ENCODE measurements at regions of chr13 and their contacts with region 1.

Region 1: DNA sequence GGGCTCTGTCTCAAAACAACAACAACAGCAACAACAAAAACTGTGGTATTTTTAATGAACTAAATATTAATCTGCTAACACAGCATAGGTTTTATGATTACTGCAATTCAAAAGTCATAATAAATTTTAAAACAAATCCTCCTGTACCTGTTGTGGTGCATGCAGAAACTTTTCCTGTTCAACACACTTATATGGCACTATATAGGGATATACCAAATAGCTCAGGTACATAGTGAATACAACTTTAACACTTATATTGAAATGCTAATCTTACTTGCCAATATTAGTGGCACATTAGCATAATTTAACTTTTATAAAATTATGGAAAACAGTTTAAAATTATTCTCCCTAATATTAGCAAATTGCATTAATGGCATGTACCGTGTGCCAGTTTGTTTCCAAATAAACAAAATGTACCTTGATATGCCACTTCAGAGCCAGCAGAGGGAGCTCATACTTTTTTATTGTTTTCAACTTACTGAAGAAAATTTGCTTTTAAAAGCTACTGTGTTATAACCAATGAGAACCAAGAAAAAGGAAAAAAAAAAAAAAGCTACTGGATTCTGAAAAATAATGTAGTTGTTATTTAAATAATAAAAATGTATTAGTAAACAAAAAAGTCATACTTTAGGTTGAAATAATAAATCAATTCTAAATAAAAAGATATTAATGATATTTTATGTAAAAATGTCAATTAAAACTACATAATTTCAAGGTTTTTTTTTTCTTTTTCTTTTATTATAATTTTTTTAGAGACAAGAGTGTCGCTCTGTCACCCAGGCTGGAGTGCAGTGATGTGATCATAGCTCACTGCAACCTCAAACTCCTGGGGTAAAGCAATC is 18.0 kb upstream of the RBM26 start:
- DNase-seq: no peak
- ATAC-seq: peak in 1 of 2 donors; percentile 59

Region 2: GRCh38 chr13:79128158-79128557 is 295.9 kb before region 1 on chr13:
- intact Hi-C with region 1: no loop called
- DNase-seq: no peak
- ATAC-seq: no peak

Region 3: DNA sequence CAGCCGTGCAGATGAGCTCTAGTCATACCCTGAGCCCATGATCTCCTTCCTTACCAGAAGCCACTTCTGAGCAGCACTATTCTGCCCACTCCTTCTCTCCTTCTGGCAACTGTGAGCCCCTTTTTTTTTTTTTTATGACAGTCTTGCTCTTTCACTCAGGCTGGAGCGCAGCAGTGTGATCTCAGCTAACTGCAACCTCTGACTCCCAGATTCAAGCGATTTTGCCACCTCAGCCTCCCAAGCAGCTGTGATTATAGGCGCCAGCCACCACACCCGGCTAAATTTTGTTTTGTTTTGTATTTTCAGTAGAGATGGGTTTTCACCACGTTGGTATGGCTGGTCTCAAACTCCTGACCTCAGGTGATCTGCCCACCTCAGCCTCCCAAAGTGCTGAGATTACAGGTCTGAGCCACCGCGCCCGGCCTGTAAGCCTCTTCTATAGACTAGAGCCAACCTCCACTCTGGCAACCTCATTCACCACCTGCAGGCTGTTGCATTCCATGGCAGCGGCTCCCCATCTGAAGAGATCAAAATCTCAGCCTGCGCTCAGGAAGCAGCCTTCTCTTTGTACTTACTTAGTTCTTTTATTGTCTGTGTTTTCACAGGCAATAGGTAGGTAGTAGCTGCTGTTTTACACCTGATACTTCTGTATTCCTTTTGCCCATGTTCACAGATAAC is 22.1 kb after region 1 on chr13:
- intact Hi-C with region 1: no loop called
- DNase-seq: no peak
- ATAC-seq: no peak

Region 4: DNA sequence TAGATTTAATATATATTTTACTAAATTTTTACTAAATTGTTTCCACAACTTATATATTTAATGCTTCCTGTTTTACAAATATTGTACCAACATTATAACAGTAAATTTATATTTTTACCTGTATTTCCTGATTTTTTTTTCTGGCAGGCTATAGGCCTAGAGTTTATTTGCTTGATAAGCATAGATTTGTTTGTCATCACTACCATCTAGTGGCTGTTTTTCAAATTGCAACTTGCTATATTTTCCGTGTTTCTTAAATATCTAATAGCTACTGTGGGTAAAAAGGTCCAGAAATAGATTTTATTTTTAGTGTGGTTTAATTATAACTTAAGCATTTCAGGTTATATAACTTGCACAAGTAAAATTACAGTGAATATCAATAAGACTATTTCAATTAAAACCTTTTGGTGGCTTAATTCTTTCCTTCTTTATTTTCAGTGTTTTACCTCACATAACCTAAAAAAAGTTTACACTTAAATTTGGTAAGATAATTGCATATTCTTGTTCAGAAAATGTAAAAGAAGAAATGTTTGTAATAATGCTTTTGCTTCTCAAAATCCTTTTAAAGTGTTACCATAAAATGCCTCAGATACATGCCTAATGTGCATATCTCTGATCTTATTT is 117.5 kb after region 1 on chr13:
- intact Hi-C with region 1: loop called (anchors 2 to 5 kb)
- DNase-seq: no peak
- ATAC-seq: no peak

Region 5: GRCh38 chr13:79589603-79590393 is 165.8 kb after region 1 on chr13:
- intact Hi-C with region 1: no loop called
- DNase-seq: no peak
- ATAC-seq: peak in 1 of 2 donors; percentile 44